ENCODE measurements at regions of chr1 and their contacts with region 1.

Region 1: DNA sequence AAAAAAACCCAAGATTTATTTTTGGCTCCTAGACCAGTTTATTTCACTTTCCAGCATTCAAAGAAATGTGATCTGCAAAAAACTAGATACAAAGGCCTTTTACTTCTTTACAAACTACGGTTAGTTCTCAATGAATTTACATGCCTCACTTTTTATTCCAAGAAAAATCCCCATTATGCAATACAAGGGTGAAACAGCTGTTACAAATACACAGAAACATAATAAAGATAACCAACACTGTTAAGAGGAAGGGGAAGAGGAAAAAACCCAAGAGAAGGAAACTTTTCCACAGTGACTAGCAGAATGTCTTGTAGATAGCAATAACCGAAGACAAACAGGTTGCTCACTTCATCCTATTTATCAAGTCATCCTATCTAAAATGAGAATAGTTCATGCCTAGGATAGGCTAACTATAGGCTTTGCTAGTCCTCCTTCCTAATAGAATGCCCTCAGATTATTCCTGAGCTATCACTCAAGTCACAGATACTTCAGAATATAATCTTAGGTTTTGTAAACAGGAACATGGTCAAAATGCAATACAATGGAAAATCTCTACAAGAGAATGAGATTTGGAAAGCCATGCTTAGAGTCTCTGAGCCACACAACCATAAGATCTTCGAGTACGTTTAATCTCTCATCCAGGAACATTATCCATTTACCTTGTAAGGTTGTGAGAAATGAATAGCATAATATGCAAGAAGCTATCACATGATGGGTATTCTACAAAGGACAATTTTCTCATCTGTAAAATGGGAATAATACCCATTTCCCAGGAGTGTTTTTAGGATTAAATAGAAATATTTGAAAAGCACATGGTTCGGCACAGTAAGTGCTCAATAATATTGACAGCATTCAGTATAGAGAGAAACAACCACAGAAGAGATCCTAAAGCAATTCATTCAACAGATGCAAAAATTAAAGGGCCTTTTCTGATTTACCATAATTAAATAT is 5.4 kb downstream of the PNRC2 start:
- DNase-seq: no peak
- ATAC-seq: peak; percentile 7
- H3K4me3 Mint-ChIP-seq: no peak overlapping the region
- H3K27ac Mint-ChIP-seq: peak overlapping the region; percentile 80
- H3K4me1 Mint-ChIP-seq: peaks cover 61% of the 10 kb centered on the region
- H3K27me3 Mint-ChIP-seq: no peaks in the 10 kb centered on the region

Region 2: GRCh38 chr1:23838401-23838866 is 126.6 kb before region 1 on chr1:
- CTCF ChIA-PET with region 1: no interaction called
- POLR2A ChIA-PET with region 1: no interaction called
- DNase-seq: peak; percentile 82
- ATAC-seq: peak; percentile 100
- H3K4me3 Mint-ChIP-seq: peak overlapping the region; percentile 64
- H3K27ac Mint-ChIP-seq: peak overlapping the region; percentile 9
- H3K4me1 Mint-ChIP-seq: peaks cover 16% of the 10 kb centered on the region
- H3K27me3 Mint-ChIP-seq: peaks cover 19% of the 10 kb centered on the region

Region 3: DNA sequence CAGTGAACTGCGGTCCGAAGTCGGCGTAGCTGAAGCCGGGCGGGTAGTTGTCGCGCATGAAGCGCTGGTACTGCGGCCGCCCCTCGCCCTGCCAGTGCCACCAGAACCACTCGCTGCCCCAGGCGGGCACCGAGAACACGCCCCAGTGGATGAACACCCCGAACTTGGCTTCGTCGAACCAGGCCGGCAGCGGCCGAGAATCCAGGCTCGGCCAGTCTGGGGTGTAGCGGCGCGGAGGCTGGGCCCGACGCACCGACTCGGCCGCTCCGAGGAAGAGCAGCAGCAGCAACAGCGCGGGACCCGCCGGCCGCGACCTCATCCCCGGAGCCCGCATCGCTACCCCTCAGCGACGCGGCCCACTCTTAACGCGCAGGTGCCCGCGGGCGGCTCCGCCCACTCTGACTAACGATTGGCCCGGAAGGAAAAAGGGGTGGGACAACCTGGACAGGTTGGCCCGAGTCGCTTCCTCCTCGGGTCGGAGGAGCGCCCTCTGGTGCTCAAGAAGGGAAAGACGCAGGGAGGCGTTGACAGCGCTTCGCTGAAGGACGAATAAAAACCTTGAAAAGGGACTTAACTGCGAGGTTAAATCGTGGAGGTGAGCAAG is 97.0 kb before region 1 on chr1 and contains the start of gene FUCA1:
- CTCF ChIA-PET with region 1: no interaction called
- POLR2A ChIA-PET with region 1: no interaction called
- DNase-seq: peak; percentile 96
- ATAC-seq: peak; percentile 100
- H3K4me3 Mint-ChIP-seq: peak within 1 kb of the TSS; percentile 78
- H3K27ac Mint-ChIP-seq: peak within 1 kb of the TSS; percentile 63
- H3K4me1 Mint-ChIP-seq: peaks cover 34% of the 10 kb centered on the region
- H3K27me3 Mint-ChIP-seq: peaks cover 8% of the 10 kb centered on the region
- total RNA-seq, gene FUCA1: 7.1 to 7.3 TPM

Region 4: GRCh38 chr1:23930861-23931490 is 34.1 kb before region 1 on chr1:
- CTCF ChIA-PET with region 1: no interaction called
- POLR2A ChIA-PET with region 1: no interaction called
- DNase-seq: no peak
- ATAC-seq: no peak
- H3K4me3 Mint-ChIP-seq: no peak overlapping the region
- H3K27ac Mint-ChIP-seq: no peak overlapping the region
- H3K4me1 Mint-ChIP-seq: no peaks in the 10 kb centered on the region
- H3K27me3 Mint-ChIP-seq: peaks cover 7% of the 10 kb centered on the region

Region 5: DNA sequence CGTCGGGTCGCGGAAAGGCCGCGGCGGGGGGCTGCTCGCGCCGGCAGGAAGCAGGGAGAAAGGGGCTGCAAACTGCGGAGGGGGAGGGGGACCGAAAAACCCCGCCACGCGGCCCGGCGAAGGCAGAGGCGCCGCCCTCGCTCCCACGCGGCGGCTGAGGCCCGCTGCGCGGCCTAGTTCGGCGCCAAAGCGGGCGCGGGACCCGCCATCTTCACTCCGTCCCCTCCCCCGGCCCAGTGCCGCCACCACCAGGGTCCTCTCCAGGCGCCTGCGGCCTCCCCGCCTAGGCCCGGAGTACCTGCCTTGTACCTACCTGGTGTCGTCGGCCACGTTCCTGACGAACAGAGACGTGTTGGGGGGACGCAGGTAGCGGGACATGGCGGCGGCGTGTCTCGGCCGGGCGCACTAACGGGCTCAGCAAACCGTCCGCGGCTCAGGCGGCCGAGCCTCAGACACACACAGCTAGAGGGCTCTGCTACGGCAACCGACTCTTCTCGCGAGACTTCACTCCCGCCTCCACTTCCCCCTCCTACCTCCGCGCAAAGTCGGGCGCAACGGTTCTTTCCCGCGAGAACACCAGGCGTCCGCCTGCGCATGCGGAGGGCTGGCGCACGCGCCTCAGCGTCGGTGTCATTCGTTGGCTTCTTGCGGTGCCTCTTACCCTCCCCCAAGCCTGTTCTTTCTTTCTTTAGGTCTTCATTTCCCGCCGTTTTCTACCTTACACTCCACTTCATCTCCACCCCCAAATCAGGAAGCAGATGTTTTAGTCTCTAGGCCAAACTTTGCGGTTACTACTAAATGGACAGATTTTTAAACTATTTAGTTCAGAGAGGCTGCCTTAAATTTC is 15.0 kb after region 1 on chr1 and contains the start of gene SRSF10:
- CTCF ChIA-PET with region 1: interaction called, 7 read pairs
- POLR2A ChIA-PET with region 1: interaction called, 151 read pairs
- DNase-seq: peak; percentile 99
- ATAC-seq: peak; percentile 95
- H3K4me3 Mint-ChIP-seq: peak within 1 kb of the TSS; percentile 92
- H3K27ac Mint-ChIP-seq: peak within 1 kb of the TSS; percentile 98
- H3K4me1 Mint-ChIP-seq: peaks cover 41% of the 10 kb centered on the region
- H3K27me3 Mint-ChIP-seq: no peaks in the 10 kb centered on the region
- total RNA-seq, gene SRSF10: 223 to 228 TPM

Measured in activated CD8-positive, alpha-beta T cell treated with anti-CD3 and anti-CD28 coated beads, Interleukin-2, amount 10 ng/mL, durations not matched to agents 7 days and 5 days (primary cell).